ENCODE measurements at regions of chr2 and their contacts with region 1.

Region 1: GRCh38 chr2:133765658-133766057 is 197.4 kb upstream of the NCKAP5 start:
- DNase-seq: no peak

Region 2: GRCh38 chr2:133415210-133415876 is 350.3 kb before region 1 on chr2:
- intact Hi-C with region 1: loop called (anchors 10 kb)
- DNase-seq: no peak

Region 3: DNA sequence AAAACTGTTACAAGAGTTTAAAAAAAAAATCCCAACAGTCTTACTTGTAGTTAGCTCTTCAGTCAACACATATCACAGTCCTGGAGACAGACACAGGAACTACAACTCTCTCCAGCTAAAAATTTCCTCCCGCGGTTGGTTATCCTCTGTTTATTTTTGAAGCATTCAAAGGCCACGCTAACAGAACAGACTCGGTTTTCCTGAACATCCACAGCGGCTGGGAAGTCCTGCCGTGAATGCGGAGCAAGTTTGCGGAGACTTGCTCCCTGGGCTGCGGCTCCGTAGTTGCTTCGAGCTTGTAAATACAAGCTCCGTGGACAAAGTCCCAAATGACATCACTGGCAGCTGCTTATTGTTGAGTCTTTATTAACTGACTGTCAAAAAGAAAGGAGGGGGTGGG is 197.5 kb before region 1 on chr2 and contains the start of gene NCKAP5:
- intact Hi-C with region 1: loop called (anchors 5 kb)
- DNase-seq: no peak
- total RNA-seq, gene NCKAP5: 10.6 TPM

Region 4: DNA sequence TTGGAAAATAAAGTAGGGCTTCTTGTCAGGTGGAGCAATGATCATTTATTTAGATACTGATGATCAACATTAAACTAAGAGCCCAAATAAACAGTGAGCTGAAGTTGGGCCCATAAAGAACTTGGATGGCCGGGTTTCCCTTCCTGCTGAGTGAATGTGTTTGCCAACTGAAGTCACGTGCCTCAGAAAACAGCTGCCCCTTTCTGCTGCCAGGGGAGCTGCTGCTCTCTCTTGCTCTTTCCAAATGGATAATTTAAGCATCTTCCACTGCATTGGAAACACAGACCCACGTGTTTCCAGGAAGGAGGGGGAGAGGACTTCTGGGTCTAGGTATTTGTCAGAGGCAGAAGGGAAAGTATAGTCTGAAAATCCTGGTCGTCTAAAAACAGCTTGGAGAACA is 174.5 kb before region 1 on chr2:
- intact Hi-C with region 1: loop called (anchors 5 kb)
- DNase-seq: no peak

Region 5: GRCh38 chr2:133642791-133643191 is 122.9 kb before region 1 on chr2:
- intact Hi-C with region 1: no loop called
- DNase-seq: no peak

Measured in cardiac septum (tissue), 1 donor.